Sigmoid colon (tissue), 7 donors: ENCODE measurements at regions of chr17 and their contacts with region 1.

Region 1: GRCh38 chr17:3893003-3893719 is at the start of gene CAMKK1:
- DNase-seq: peak; percentile 95
- H3K4me3 ChIP-seq: peak within 1 kb of the TSS; percentile 57 to 76 (median 70)
- H3K27ac ChIP-seq: peak within 1 kb of the TSS; percentile 86 to 96 (median 90)
- H3K4me1 ChIP-seq: peaks cover 0 to 68% (median 65%) of the 10 kb centered on the region in 4 donors
- H3K27me3 ChIP-seq: no peaks in the 10 kb centered on the region
- CTCF ChIP-seq: no peak
- EP300 ChIP-seq: no peak
- POLR2A ChIP-seq: no peak
- total RNA-seq, gene CAMKK1: 3.8 to 12.8 (median 8.1) TPM

Region 2: GRCh38 chr17:3845621-3846441 is 47.3 kb before region 1 on chr17 and contains the start of gene NCBP3:
- intact Hi-C with region 1: loop called (anchors 2 kb)
- DNase-seq: peak; percentile 95
- H3K4me3 ChIP-seq: peak within 1 kb of the TSS; percentile 78 to 100 (median 88)
- H3K27ac ChIP-seq: peak within 1 kb of the TSS; percentile 91 to 97 (median 93)
- H3K4me1 ChIP-seq: peaks cover 0 to 22% (median 19%) of the 10 kb centered on the region in 4 donors
- H3K27me3 ChIP-seq: no peaks in the 10 kb centered on the region
- CTCF ChIP-seq: peak; percentile 86 to 92 (median 90)
- EP300 ChIP-seq: no peak
- POLR2A ChIP-seq: peak; percentile 70 to 77
- total RNA-seq, gene NCBP3: 20.9 to 23.0 (median 21.7) TPM

Region 3: GRCh38 chr17:3915995-3916696 is 23.0 kb after region 1 on chr17 and contains the start of gene P2RX1:
- intact Hi-C with region 1: no loop called
- DNase-seq: no peak
- H3K4me3 ChIP-seq: peak within 1 kb of the TSS in 3 of 4 donors; percentile 4 to 37 (median 35)
- H3K27ac ChIP-seq: peak within 1 kb of the TSS; percentile 22 to 75 (median 72)
- H3K4me1 ChIP-seq: peaks cover 0 to 28% (median 11%) of the 10 kb centered on the region in 4 donors
- H3K27me3 ChIP-seq: no peaks in the 10 kb centered on the region
- CTCF ChIP-seq: no peak
- EP300 ChIP-seq: no peak
- POLR2A ChIP-seq: no peak
- total RNA-seq, gene P2RX1: 3.6 to 55.9 (median 10.0) TPM

Region 4: DNA sequence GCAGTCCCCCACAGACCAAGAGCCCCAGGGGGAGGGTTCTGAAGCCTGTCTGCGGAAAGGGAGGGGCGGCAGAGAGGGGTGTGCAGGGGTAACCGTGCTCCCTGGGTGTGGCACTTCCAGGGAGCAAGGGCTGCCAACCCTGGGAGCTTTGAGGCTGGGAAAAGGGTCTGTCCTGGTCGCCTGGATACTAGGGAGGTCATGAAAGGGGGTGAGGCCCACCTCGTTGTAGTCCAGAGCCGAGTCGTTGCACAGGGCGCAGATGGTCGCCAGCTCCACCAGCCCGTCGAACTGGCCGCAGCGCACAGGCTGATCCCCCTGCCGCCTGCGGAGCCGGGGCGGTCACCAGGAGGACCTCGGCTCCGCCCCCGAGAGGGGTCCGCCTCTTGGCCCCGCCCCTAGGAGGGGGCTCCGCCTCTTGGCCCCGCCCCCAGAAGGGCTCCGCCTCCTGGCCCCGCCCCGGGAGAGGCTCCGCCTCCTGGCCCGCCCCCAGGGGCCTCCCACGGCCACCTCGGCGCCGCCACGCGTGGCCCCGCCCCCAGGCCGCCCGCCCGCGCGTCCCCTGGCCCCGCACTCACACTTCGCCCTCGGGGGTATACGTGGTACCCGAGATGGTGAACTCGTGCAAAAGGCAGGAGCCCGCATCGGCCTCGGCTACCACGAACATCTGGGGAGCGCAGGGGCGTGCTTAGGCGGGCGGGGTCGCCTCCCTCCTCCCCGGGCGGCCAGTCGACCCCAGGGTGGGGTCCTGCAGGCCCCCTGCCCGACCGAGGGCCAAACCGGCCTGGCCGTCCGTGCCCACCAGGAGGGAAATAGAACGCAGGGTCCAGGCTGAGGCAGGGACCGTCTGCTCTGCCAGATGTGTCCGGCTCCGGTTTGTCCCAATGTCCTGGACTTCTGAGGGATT is 51.6 kb after region 1 on chr17:
- intact Hi-C with region 1: loop called (anchors 5 kb)
- DNase-seq: peak; percentile 86
- H3K4me3 ChIP-seq: peak overlapping the region; percentile 31 to 57 (median 48)
- H3K27ac ChIP-seq: peak overlapping the region; percentile 33 to 62 (median 48)
- H3K4me1 ChIP-seq: peaks cover 0 to 18% (median 16%) of the 10 kb centered on the region in 4 donors
- H3K27me3 ChIP-seq: no peaks in the 10 kb centered on the region
- CTCF ChIP-seq: no peak
- EP300 ChIP-seq: no peak
- POLR2A ChIP-seq: no peak